CD14-positive monocyte (primary cell): ENCODE measurements at regions of chr19 and their contacts with region 1.

Region 1: GRCh38 chr19:12736995-12737834 is at the start of gene GET3:
- DNase-seq: peak; percentile 86 to 93 (median 93)
- H3K4me3 ChIP-seq: peak within 1 kb of the TSS; percentile 66 to 97 (median 81)
- H3K4me3 Mint-ChIP-seq: peak within 1 kb of the TSS; percentile 99
- H3K27ac ChIP-seq: peak within 1 kb of the TSS; percentile 46 to 93
- H3K27ac Mint-ChIP-seq: peak within 1 kb of the TSS; percentile 92 to 98 (median 96)
- H3K4me1 ChIP-seq: peaks cover 42 to 47% of the 10 kb centered on the region in 2 donors
- H3K4me1 Mint-ChIP-seq: peaks cover 39% of the 10 kb centered on the region
- H3K27me3 ChIP-seq: no peaks in the 10 kb centered on the region
- H3K27me3 Mint-ChIP-seq: peaks cover 0 to 2% (median 2%) of the 10 kb centered on the region in 3 donors
- CTCF ChIP-seq: no peak
- polyA plus RNA-seq, gene GET3: 97.5 to 122 (median 108) TPM

Region 2: GRCh38 chr19:12681074-12681951 is 55.9 kb before region 1 on chr19 and contains the start of gene DHPS:
- intact Hi-C with region 1: loop called in 1 of 2 experiments (anchors 5 kb)
- DNase-seq: peak; percentile 97 to 99 (median 98)
- H3K4me3 ChIP-seq: peak within 1 kb of the TSS; percentile 70 to 88 (median 70)
- H3K4me3 Mint-ChIP-seq: peak within 1 kb of the TSS; percentile 96 to 98
- H3K27ac ChIP-seq: peak within 1 kb of the TSS; percentile 93 to 94
- H3K27ac Mint-ChIP-seq: peak within 1 kb of the TSS; percentile 93 to 99 (median 97)
- H3K4me1 ChIP-seq: peaks cover 16 to 26% of the 10 kb centered on the region in 2 donors
- H3K4me1 Mint-ChIP-seq: peaks cover 19% of the 10 kb centered on the region
- H3K27me3 ChIP-seq: no peaks in the 10 kb centered on the region
- H3K27me3 Mint-ChIP-seq: peaks cover 0 to 6% (median 0%) of the 10 kb centered on the region in 3 donors
- CTCF ChIP-seq: no peak
- polyA plus RNA-seq, gene DHPS: 51.0 to 130 (median 53.4) TPM

Region 3: DNA sequence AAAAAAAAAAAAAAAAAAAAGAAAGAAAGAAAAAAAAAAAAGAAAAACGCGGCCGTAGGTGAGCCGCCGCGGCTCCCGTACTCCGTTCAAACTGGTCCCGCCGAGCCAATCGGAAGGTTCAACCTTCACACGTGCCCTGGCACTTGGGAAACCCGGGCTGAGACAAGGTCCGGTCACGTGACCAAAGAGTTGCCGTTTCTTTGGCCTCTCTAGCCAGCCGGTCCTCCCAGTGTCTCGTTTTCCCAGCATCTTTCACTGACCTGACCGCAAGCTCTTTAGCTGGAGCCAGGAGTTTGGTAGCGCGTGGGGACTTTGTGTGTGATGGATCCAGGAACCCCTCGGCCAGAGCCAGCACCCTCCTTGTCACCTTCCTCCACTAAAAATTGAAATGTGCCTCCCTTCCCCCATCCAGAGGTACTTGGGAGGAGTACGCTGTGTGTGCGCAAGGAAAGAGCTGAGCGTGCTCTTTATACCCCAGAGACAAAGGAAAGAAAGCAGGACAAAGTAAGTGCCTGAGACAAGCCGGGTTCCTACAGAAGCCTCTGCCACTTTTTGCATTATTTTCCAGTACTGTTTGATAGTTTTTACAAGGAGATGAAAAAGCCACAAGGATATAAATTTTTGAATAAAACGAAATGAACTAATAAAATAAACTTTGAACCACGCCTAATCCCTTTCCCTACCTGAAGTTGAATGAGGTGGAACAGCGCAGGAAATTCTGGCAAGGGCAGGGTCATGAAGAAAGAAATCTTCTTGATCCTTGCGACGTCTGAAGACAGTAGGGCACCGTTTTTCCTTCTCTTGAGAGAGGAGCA is 14.4 kb before region 1 on chr19:
- intact Hi-C with region 1: loop called in 1 of 2 experiments (anchors 2 kb)
- DNase-seq: peak; percentile 96 to 99 (median 98)
- H3K4me3 ChIP-seq: peak overlapping the region; percentile 49 to 79 (median 62)
- H3K4me3 Mint-ChIP-seq: peak overlapping the region; percentile 85 to 95
- H3K27ac ChIP-seq: peak overlapping the region; percentile 26 to 74
- H3K27ac Mint-ChIP-seq: peak overlapping the region; percentile 80 to 92 (median 86)
- H3K4me1 ChIP-seq: peaks cover 34 to 39% of the 10 kb centered on the region in 2 donors
- H3K4me1 Mint-ChIP-seq: peaks cover 38% of the 10 kb centered on the region
- H3K27me3 ChIP-seq: no peaks in the 10 kb centered on the region
- H3K27me3 Mint-ChIP-seq: peaks cover 0 to 3% (median 0%) of the 10 kb centered on the region in 3 donors
- CTCF ChIP-seq: no peak